Aorta (tissue), 5 donors: ENCODE measurements at regions of chr3 and their contacts with region 1.

Region 1: DNA sequence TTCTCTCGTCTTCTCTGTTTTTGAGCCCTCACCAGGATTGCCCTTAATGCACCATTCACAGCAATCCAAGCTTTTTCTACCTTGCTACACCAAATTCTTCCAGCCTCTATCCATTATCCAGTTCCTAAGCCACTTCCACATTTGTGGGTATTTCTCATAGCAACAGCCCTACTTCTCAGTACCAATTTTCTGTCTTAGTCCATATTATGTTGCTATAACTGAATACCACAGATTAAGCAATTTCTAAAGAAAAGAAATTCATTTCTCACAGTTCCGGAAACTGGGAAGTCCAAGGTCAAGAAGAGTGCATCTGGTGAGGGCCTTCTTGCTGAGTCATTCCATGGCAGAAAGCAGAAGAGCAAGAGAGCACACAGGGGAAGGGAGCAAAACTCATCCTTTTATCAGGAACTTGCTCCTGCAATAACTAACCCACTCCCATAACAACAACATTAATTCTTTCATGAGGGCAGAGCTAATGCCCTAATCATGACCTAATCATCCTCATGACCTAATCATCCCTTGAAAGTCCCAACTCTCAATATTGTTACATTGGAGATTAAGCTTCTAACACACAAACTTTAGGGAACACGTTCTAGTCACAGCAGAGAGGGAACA is 9.7 kb upstream of the EIF1B start:
- DNase-seq: no peak
- ATAC-seq: peak; percentile 88
- H3K4me3 ChIP-seq: no peak overlapping the region
- H3K27ac ChIP-seq: no peak overlapping the region
- H3K4me1 ChIP-seq: no peaks in the 10 kb centered on the region
- H3K27me3 ChIP-seq: no peaks in the 10 kb centered on the region

Region 2: DNA sequence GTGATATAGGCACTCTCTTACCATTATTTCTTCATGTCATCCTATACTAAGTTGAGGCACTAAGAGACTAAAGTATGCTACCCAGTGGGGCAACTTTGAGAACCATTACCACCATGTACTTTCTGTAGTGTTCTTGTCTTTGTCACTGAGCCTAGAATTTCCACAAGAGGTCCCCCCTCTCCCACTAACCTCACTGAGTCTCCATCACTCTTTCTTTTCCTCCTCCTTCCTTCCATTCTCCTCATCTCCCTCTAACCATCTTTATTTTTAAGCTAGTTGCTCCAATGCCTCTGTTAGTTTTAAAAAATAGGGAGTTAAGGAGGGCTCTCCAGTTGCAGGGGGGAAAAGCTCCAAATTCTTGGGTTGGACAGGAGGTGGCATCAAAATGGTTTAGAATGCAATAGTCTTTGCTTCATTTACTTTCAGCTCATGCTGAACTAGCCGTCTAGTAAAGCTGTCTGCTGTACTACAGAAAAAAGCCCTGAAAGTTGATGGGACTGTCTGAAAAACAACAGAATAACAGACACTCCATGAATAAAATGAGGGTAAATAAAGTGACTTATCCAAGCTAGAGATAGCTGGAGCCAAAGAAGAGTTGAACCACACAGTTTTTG is 575.5 kb before region 1 on chr3:
- intact Hi-C with region 1: loop called in 1 of 2 experiments (anchors 10 kb)
- DNase-seq: no peak
- ATAC-seq: no peak
- H3K4me3 ChIP-seq: no peak overlapping the region
- H3K27ac ChIP-seq: no peak overlapping the region
- H3K4me1 ChIP-seq: no peaks in the 10 kb centered on the region
- H3K27me3 ChIP-seq: no peaks in the 10 kb centered on the region

Region 3: GRCh38 chr3:40237889-40238571 is 61.8 kb before region 1 on chr3:
- intact Hi-C with region 1: no loop called
- DNase-seq: no peak
- ATAC-seq: no peak
- H3K4me3 ChIP-seq: no peak overlapping the region
- H3K27ac ChIP-seq: no peak overlapping the region
- H3K4me1 ChIP-seq: no peaks in the 10 kb centered on the region
- H3K27me3 ChIP-seq: no peaks in the 10 kb centered on the region

Region 4: DNA sequence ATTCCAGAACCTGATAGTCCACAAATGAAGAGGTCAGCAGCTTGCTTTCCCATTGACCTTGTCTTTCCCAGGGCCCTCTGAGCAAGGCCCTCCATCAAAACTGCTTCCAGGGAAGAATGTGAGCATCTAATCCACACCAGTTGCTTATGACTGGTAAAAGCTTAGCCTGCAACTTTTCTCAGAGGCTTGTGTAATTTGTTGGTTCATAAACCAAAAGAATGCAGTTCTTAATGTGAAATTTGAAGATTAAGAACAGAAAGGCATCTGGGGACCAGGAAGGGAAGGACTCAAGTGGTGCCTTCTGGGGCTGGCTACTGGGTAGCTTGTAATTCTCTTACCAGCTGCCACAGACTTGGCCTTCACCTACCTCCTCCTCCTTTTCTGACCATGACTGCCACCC is 51.2 kb before region 1 on chr3:
- intact Hi-C with region 1: no loop called
- DNase-seq: no peak
- ATAC-seq: no peak
- H3K4me3 ChIP-seq: no peak overlapping the region
- H3K27ac ChIP-seq: no peak overlapping the region
- H3K4me1 ChIP-seq: no peaks in the 10 kb centered on the region
- H3K27me3 ChIP-seq: no peaks in the 10 kb centered on the region